Left ventricle myocardium inferior (tissue), 1 donor: ENCODE measurements at regions of chr16 and their contacts with region 1.

Region 1: DNA sequence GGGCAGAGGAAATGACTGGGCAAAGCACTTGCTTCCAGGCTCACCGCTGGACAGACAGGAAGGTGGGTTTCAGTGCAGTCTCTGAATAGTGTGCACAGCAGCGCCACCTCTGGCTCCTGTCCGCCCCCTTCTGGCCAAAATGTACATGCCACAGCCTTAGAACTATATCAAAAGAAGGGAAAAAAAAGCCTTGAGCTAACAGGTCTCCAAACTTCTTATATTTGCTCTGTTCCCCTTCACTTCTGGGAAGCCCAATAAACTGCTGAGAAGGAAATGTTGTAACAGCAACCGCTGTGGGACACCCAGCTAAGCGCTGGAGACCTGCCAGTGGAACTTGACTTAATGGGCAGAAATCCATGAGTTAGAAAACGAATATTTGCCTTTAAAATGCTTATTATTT is 17.5 kb downstream of the COG7 start:
- DNase-seq: peak; percentile 39
- H3K4me3 ChIP-seq: no peak overlapping the region
- H3K27ac ChIP-seq: no peak overlapping the region
- H3K4me1 ChIP-seq: no peaks in the 10 kb centered on the region
- H3K27me3 ChIP-seq: no peaks in the 10 kb centered on the region
- CTCF ChIP-seq: peak; percentile 78

Region 2: GRCh38 chr16:22898874-22899348 is 536.6 kb before region 1 on chr16:
- intact Hi-C with region 1: loop called (anchors 5 kb)
- DNase-seq: peak; percentile 68
- H3K4me3 ChIP-seq: no peak overlapping the region
- H3K27ac ChIP-seq: peak overlapping the region; percentile 47
- H3K4me1 ChIP-seq: peaks cover 17% of the 10 kb centered on the region
- H3K27me3 ChIP-seq: peaks cover 80% of the 10 kb centered on the region
- CTCF ChIP-seq: peak; percentile 91

Region 3: GRCh38 chr16:23181506-23181905 is 254.0 kb before region 1 on chr16:
- intact Hi-C with region 1: loop called (anchors 2 kb)
- DNase-seq: no peak
- H3K4me3 ChIP-seq: no peak overlapping the region
- H3K27ac ChIP-seq: no peak overlapping the region
- H3K4me1 ChIP-seq: peaks cover 29% of the 10 kb centered on the region
- H3K27me3 ChIP-seq: peaks cover 95% of the 10 kb centered on the region
- CTCF ChIP-seq: no peak

Region 4: DNA sequence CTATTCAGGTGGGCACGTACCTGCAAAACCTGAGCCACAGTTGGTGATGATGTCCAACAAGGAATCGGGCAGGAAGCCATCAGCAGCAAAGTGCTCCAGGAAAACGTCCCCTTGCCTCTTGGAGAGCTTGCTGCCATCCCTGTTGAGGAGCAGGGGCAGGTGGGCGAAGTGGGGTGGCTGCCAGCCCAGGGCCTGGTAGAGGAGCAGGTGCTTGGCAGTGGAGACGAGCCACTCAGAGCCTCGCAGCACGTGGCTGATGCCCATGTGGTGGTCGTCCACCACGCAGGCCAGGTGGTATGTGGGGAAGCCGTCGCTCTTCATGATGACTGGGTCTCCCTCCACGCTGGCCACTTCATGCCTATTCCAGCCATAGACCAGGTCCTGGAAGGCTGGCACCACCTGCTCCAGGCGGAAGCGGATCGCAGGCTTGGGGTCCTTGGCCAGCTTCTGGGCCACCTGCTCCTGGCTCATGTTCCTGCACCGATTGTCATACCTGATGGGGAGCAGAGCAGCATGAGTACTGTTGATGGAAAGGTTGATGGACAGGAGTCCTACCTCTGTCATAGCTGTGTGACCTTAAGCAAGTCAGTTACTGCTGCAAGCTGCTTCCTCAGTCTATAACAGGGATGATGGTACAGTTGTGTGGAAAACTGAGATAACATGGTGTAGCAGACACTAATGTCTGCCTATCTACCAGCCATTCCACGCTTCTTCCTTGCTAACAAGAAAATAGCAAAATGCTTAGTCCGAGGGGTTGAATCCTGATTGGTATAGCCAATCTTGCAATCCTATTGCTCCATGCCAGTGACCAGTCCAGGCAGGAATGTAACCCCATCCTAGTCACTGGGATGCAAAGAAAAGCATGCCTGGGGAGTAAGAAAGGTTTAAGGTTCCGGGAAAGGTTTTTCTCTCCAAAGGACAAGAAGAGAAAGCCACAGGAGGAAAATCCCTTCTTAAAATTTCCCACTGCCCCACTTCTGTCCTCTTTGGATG is 99.7 kb after region 1 on chr16:
- intact Hi-C with region 1: no loop called
- DNase-seq: no peak
- H3K4me3 ChIP-seq: no peak overlapping the region
- H3K27ac ChIP-seq: no peak overlapping the region
- H3K4me1 ChIP-seq: no peaks in the 10 kb centered on the region
- H3K27me3 ChIP-seq: no peaks in the 10 kb centered on the region
- CTCF ChIP-seq: no peak